Heart right ventricle (tissue), 16 donors: ENCODE measurements at regions of chr17 and their contacts with region 1.

Region 1: DNA sequence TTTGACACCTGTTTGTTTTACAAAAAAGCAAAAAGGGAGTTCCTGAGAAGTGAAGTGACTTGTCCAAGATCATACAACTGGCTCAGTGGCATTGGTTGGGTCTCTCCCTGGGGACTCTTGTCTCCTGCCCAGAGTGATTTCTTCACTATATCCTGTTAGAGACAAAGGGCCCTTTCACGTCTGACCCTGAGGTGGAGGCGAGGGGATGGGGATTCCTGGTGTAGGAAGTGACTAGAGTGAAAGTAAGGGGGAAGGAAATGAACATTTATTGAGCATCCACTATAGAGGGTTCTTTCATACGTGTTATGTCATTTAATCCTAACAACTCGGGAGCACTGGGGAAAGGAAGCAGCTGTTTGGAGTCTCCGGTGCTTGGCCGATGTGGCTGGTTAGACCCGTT is 9.0 kb downstream of the ITGB3 start:
- DNase-seq: no peak
- ATAC-seq: peak in 1 of 8 donors; percentile 22
- H3K4me3 ChIP-seq: no peak overlapping the region
- H3K27ac ChIP-seq: peak overlapping the region in 1 of 10 donors; percentile 10
- H3K4me1 ChIP-seq: peaks cover 0 to 44% (median 6%) of the 10 kb centered on the region in 9 donors
- H3K27me3 ChIP-seq: peaks cover 0 to 8% (median 0%) of the 10 kb centered on the region in 7 donors
- CTCF ChIP-seq: no peak

Region 2: GRCh38 chr17:47295062-47295845 is 32.7 kb after region 1 on chr17:
- intact Hi-C with region 1: loop called in 1 of 10 experiments (anchors 5 kb)
- DNase-seq: no peak
- ATAC-seq: peak in 1 of 8 donors; percentile 11
- H3K4me3 ChIP-seq: no peak overlapping the region
- H3K27ac ChIP-seq: peak overlapping the region in 2 of 10 donors; percentile 55 to 61
- H3K4me1 ChIP-seq: peaks cover 5 to 23% (median 13%) of the 10 kb centered on the region in 9 donors
- H3K27me3 ChIP-seq: no peaks in the 10 kb centered on the region
- CTCF ChIP-seq: no peak

Region 3: DNA sequence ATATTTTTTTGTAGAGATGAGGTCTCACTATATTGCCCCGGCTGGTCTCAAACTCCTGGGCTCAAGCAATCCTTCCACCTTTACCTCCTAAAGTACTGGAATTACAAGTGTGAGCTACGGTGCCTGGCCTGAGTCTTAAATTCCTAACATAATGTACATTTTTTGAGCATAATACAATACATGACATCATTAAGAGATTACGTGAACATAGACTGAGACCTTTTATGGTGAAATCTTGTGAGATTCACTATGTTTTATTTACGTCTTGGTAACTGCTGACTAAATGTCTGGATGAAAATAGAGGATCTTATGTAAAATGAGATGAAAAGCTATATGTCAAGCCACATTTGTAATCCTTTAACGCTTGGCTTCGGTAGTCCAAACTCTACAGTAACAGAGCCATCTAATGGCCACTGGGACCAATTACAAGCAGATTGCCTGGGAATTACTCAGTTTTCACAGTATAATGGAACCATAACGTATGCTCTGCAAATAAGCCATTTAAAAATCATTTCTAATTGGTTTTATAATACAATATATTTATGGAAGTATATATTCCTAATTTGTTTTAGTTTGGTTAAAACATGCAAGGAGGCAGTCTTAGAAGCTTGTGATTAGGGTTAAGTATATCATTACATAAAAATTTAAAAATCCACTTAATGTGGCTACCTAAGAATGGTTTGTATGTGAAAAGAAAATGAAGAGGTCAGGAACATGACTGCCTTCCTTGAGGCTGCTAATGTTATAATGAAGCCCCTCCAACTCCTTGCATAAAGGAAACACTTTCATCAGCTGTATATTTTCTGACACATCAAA is 53.1 kb after region 1 on chr17:
- intact Hi-C with region 1: no loop called
- DNase-seq: peak in 1 of 2 donors; percentile 33
- ATAC-seq: peak in 7 of 8 donors; percentile 58 to 88 (median 83)
- H3K4me3 ChIP-seq: no peak overlapping the region
- H3K27ac ChIP-seq: peak overlapping the region in 4 of 10 donors; percentile 5 to 49 (median 12)
- H3K4me1 ChIP-seq: peaks cover 0 to 18% (median 6%) of the 10 kb centered on the region in 9 donors
- H3K27me3 ChIP-seq: no peaks in the 10 kb centered on the region
- CTCF ChIP-seq: peak; percentile 55 to 93 (median 84)